ENCODE measurements at regions of chr7 and their contacts with region 1.

Region 1: GRCh38 chr7:139105484-139105883 is 4.0 kb downstream of the ZC3HAV1 start:
- DNase-seq: no peak

Region 2: GRCh38 chr7:138975343-138976104 is 130.0 kb before region 1 on chr7:
- CTCF ChIA-PET with region 1: interaction called, 10 read pairs
- POLR2A ChIA-PET with region 1: no interaction called
- DNase-seq: peak; percentile 32

Measured in HEK293T (cell line).